Calu3 (cell line): ENCODE measurements at regions of chr6 and their contacts with region 1.

Region 1: GRCh38 chr6:90677440-90677839 is 90.6 kb upstream of the MAP3K7 start:
- DNase-seq: no peak
- H3K4me3 Mint-ChIP-seq: no peak overlapping the region
- H3K27ac Mint-ChIP-seq: no peak overlapping the region
- H3K4me1 Mint-ChIP-seq: no peaks in the 10 kb centered on the region
- H3K27me3 Mint-ChIP-seq: peaks cover 69% of the 10 kb centered on the region
- CTCF ChIP-seq: no peak

Region 2: DNA sequence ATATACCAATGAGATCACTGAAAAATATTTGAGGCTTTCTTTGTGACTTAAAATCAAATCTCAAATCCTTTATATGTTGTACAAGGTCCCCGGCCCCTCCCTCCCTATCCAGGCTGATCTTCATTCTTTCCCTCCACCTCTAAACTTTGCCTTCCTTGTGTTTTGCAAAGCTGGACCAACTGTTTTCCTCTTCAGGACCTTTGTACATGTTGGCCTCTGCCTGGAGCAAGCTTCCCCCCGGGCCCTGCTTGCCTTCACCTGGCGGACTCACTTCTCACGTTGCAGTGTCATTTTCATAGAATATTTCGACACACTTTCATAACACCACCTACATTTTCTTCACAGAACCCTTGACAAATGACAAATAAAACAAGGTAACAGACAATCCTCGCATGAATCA is 22.1 kb before region 1 on chr6:
- CTCF ChIA-PET with region 1: interaction called, 10 read pairs
- intact Hi-C with region 1: no loop called
- DNase-seq: no peak
- H3K4me3 Mint-ChIP-seq: no peak overlapping the region
- H3K27ac Mint-ChIP-seq: no peak overlapping the region
- H3K4me1 Mint-ChIP-seq: no peaks in the 10 kb centered on the region
- H3K27me3 Mint-ChIP-seq: peaks cover 24% of the 10 kb centered on the region
- CTCF ChIP-seq: no peak

Region 3: GRCh38 chr6:90715093-90715655 is 37.7 kb after region 1 on chr6:
- CTCF ChIA-PET with region 1: no interaction called
- intact Hi-C with region 1: no loop called
- DNase-seq: no peak
- H3K4me3 Mint-ChIP-seq: no peak overlapping the region
- H3K27ac Mint-ChIP-seq: no peak overlapping the region
- H3K4me1 Mint-ChIP-seq: peaks cover 6% of the 10 kb centered on the region
- H3K27me3 Mint-ChIP-seq: peaks cover 33% of the 10 kb centered on the region
- CTCF ChIP-seq: no peak